ENCODE measurements at regions of chr15 and their contacts with region 1.

Region 1: GRCh38 chr15:36883713-36884517 is 216.4 kb downstream of the MEIS2 start:
- DNase-seq: peak; percentile 91

Region 2: DNA sequence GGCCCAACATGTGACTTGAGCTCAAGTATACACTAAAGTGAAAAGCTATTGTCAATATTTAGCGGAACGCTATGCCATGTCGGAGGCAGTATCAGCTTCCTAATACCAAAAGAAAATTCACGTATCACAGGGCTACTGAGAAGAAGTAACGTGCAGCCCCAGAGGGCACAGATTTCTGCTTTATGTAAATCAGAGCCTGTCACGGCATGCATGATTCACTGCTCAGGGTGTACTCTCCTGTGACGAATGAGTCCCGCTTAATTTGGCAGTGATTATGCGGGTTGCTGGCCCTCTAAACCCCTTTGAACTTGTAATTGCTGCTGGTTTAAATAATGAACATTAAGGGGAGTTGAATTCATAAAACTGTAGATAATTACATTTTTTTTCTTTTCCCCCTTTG is 131.1 kb after region 1 on chr15:
- intact Hi-C with region 1: loop called (anchors 5 kb)
- DNase-seq: no peak

Region 3: GRCh38 chr15:37134699-37135131 is 250.8 kb after region 1 on chr15:
- intact Hi-C with region 1: loop called (anchors 1 kb)
- DNase-seq: no peak

Region 4: DNA sequence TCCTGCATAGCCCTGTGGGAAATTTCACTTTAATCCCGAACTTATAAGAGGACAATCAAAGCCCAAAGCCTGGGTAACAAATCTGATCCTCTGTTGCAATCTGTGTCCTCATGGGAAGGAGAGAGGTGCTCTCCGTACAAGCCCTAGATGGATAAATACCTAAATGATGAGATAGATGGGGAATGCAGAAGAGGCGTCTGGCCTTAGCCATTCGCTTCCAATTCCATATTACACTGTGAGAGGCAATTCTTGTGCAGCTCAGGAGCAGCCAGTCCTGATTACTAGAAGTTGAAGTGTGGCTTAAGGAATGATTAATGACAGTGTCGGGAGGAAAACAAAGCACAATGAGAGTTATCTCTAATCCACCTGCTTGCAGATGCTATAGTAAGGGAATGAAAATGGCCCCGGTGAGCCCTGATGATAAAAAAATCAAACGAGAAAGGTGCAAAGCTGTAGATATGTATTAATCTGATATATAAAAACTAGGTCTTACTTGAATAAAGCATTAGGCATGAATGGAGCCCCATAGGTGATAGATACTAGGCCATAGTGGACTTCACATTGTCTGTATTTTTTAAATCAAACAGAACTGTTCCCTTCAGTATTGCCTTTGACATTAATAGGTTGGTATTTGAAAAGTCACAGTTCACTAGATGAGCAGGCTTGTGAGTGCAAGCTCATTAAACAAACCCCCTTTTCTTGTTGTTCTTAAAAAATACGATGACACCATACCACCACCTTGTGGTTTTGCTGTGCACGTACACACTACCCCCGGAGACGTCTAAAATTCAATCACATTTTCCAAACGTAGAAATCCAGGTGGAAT is 996.3 kb after region 1 on chr15:
- intact Hi-C with region 1: loop called (anchors 10 kb)
- DNase-seq: no peak

Measured in cardiac septum (tissue), 1 donor.